ENCODE measurements at regions of chr1 and their contacts with region 1.

Region 1: DNA sequence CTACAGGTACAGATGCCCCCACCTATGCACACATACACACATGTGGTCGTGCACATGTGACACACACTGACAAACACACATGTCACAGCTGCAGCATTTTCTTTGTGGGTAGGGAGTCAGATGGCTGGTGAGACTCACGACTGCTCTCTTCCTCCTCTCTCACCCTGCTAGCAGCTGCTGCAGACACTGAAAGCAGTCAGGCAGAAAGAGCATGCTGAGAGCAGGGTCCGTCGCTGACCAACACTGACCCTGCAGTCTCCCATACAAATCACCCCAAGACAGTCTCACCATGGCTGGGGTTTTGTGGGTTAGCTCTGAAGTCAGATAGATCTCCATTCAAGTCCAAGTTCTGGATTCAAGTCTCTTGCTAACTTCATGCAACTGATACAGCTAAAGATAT is 188.3 kb downstream of the ASTN1 start:
- DNase-seq: no peak
- H3K4me3 ChIP-seq: no peak overlapping the region
- H3K27ac ChIP-seq: no peak overlapping the region
- H3K4me1 ChIP-seq: no peaks in the 10 kb centered on the region
- CTCF ChIP-seq: no peak

Region 2: DNA sequence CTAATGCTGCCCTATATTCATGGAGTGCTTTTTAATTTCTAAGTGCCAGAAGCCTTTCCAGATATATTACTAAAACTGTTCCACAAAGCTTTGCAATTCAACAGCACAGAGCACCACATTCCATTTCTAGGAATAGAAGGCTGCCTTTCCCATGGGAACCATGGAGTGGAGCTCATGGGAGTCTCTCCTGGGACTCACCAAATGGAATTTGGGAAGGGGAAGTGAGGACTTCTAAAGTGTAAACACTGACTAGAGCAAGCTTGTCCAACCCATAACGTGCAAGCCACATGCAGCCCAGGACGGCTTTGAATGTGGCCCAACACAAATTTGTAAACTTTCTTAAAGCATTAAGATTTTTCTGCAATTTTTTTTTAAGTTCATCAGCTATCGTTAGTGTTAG is 1042.4 kb before region 1 on chr1:
- CTCF ChIA-PET with region 1: no interaction called
- POLR2A ChIA-PET with region 1: interaction called, 10 read pairs
- intact Hi-C with region 1: no loop called
- DNase-seq: no peak
- H3K4me3 ChIP-seq: no peak overlapping the region
- H3K27ac ChIP-seq: no peak overlapping the region
- H3K4me1 ChIP-seq: no peaks in the 10 kb centered on the region
- CTCF ChIP-seq: no peak

Region 3: DNA sequence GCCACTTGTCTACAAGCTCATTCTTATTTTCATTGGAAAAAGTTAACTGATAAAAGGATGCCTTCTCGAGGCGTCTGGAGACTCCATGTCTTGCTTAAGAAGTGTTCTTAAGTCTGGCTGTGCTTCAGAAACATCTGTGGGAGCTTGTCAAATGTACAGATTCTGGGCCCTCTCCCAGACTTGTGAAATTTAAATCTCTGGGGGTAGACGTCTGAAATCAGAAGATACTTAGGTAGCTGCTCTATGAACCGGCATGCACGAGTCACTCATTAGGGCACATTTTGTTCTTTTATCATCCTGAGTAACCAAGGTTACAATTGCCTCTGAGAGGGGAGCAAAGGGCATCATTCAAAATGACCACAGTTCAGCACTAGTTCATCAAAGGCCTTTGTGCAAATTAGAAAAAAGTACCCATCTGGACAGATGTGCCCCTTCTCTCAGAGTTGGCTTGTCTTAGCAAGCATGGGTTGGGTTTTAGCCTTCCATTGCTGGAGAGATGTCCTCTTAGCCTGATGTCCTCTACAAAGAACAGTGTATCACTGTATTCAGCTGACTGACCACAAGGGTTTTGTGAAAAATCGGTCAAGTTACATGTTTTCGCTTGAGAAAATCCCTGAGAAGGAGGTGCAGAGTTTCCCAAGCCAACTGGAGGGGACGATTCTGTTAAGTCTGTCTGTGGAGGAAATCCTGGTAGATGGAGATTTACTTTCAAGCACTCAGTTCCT is 31.4 kb after region 1 on chr1:
- CTCF ChIA-PET with region 1: no interaction called
- POLR2A ChIA-PET with region 1: no interaction called
- intact Hi-C with region 1: no loop called
- DNase-seq: no peak
- H3K4me3 ChIP-seq: no peak overlapping the region
- H3K27ac ChIP-seq: no peak overlapping the region
- H3K4me1 ChIP-seq: no peaks in the 10 kb centered on the region
- CTCF ChIP-seq: no peak

Measured in OCI-LY7 (cell line).